ENCODE measurements at regions of chr17 and their contacts with region 1.

Region 1: GRCh38 chr17:8118769-8119580 is 661 bp upstream of the ALOXE3 start:
- DNase-seq: peak; percentile 64 to 89 (median 80)
- ATAC-seq: peak; percentile 66 to 77 (median 72)
- H3K4me3 ChIP-seq: peak overlapping the region; percentile 73 to 99
- H3K4me3 Mint-ChIP-seq: peak overlapping the region; percentile 88 to 91 (median 89)
- H3K27ac ChIP-seq: peak overlapping the region; percentile 51
- H3K27ac Mint-ChIP-seq: peak overlapping the region; percentile 95
- H3K4me1 ChIP-seq: peaks cover 44 to 62% of the 10 kb centered on the region in 2 experiments
- H3K4me1 Mint-ChIP-seq: peaks cover 54 to 62% (median 60%) of the 10 kb centered on the region in 3 donors
- H3K27me3 ChIP-seq: peaks cover 8 to 75% of the 10 kb centered on the region in 2 experiments
- H3K27me3 Mint-ChIP-seq: peaks cover 37 to 69% of the 10 kb centered on the region in 2 donors

Region 2: GRCh38 chr17:8073627-8074484 is 45.1 kb before region 1 on chr17:
- CTCF ChIA-PET with region 1: interaction called, 4 to 12 read pairs
- POLR2A ChIA-PET with region 1: no interaction called
- DNase-seq: peak; percentile 65 to 94 (median 81)
- ATAC-seq: peak; percentile 78 to 93 (median 84)
- H3K4me3 ChIP-seq: peak overlapping the region in 1 of 2 donors; percentile 36
- H3K4me3 Mint-ChIP-seq: peak overlapping the region; percentile 63 to 71 (median 66)
- H3K27ac ChIP-seq: no peak overlapping the region
- H3K27ac Mint-ChIP-seq: peak overlapping the region in 1 of 2 donors; percentile 84
- H3K4me1 ChIP-seq: peaks cover 4 to 31% of the 10 kb centered on the region in 2 experiments
- H3K4me1 Mint-ChIP-seq: peaks cover 23 to 28% (median 25%) of the 10 kb centered on the region in 3 donors
- H3K27me3 ChIP-seq: peaks cover 8 to 71% of the 10 kb centered on the region in 2 experiments
- H3K27me3 Mint-ChIP-seq: peaks cover 36 to 49% of the 10 kb centered on the region in 2 donors

Region 3: DNA sequence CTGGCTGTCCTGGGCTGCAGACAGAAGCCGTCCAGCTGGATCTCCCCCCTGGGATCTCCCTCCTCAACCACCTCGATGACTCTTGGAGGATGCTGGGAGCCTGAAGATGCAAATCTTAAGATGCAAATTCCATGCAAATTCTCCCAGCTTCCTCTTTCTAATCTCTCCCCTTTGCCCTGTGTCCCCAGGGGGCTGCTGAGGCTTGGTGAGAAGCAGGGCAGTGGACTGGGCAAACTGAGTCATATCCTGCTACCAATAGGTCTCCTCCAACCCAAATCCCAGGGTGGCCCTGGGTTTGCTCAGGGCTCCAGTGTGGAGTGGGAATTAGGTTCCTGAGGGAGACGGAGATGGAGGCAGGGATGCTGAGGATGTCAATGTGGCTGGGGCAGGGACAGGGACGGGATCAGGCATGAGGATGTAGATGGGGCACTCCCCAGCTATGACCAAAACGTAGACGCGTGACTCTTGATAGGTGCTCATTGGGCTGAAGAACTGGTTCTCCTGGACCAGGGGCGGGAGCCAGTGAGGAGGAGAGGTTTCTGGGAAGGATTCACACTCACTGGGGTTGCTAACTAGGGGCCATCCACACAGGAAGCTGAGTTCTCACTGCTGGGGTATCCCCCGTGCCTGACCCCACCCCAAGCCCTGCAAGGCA is 27.8 kb before region 1 on chr17:
- CTCF ChIA-PET with region 1: interaction called, 6 to 27 read pairs
- POLR2A ChIA-PET with region 1: no interaction called
- DNase-seq: no peak
- ATAC-seq: no peak
- H3K4me3 ChIP-seq: no peak overlapping the region
- H3K4me3 Mint-ChIP-seq: no peak overlapping the region
- H3K27ac ChIP-seq: no peak overlapping the region
- H3K27ac Mint-ChIP-seq: no peak overlapping the region
- H3K4me1 ChIP-seq: peaks cover 0 to 13% of the 10 kb centered on the region in 2 experiments
- H3K4me1 Mint-ChIP-seq: peaks cover 12 to 21% (median 18%) of the 10 kb centered on the region in 3 donors
- H3K27me3 ChIP-seq: peaks cover 2 to 60% of the 10 kb centered on the region in 2 experiments
- H3K27me3 Mint-ChIP-seq: peaks cover 24 to 38% of the 10 kb centered on the region in 2 donors

Region 4: DNA sequence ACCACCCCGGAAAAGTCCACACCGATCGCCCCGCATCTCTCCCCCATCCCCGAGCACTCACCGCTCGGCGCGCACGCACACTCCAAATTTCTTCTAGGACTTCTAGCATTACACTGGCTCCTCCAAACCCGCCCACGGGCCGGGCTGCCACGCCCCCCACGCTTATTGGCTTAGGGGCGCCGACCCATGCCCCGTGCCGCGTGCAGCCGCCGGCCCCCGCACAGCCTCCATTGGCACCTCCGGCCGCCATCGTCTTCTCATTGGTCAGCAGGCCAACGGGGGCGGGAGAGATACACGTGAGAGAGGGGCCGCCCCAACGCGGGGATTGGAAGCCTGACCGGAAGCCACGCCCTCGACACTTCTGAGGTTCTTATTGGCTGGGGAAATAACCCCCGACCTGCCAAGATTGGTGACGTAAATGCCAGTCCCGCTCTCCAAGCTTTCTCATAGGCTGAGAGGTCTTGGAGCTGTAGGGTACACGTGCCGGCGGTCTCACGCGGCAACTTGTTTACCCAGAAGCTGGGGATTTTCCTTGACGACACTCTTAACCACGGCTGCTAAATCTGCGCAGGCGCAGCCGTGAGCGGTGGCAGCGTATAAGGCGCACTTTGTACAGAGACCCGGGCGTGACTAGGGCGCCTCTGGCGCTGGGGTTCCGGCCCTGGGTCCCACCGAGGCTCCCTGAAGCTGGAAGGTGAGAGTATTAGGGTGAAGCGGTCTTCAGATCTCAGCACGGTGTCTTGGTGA is 37.4 kb after region 1 on chr17:
- CTCF ChIA-PET with region 1: interaction called in 1 of 2 experiments, 15 read pairs
- POLR2A ChIA-PET with region 1: interaction called in 1 of 2 experiments, 12 read pairs
- DNase-seq: peak; percentile 99 to 100 (median 100)
- ATAC-seq: peak; percentile 75 to 86 (median 85)
- H3K4me3 ChIP-seq: peak overlapping the region; percentile 91 to 96
- H3K4me3 Mint-ChIP-seq: no peak overlapping the region
- H3K27ac ChIP-seq: peak overlapping the region; percentile 100
- H3K27ac Mint-ChIP-seq: no peak overlapping the region
- H3K4me1 ChIP-seq: peaks cover 34 to 93% of the 10 kb centered on the region in 2 experiments
- H3K4me1 Mint-ChIP-seq: peaks cover 39 to 70% (median 54%) of the 10 kb centered on the region in 3 donors
- H3K27me3 ChIP-seq: no peaks in the 10 kb centered on the region
- H3K27me3 Mint-ChIP-seq: no peaks in the 10 kb centered on the region

Region 5: GRCh38 chr17:8222630-8223356 is 103.8 kb after region 1 on chr17:
- CTCF ChIA-PET with region 1: interaction called in 1 of 2 experiments, 27 read pairs
- POLR2A ChIA-PET with region 1: interaction called in 1 of 2 experiments, 4 read pairs
- DNase-seq: peak; percentile 75 to 92 (median 84)
- ATAC-seq: peak; percentile 57 to 59 (median 58)
- H3K4me3 ChIP-seq: peak overlapping the region; percentile 91 to 93
- H3K4me3 Mint-ChIP-seq: peak overlapping the region; percentile 87 to 94 (median 92)
- H3K27ac ChIP-seq: peak overlapping the region; percentile 96
- H3K27ac Mint-ChIP-seq: peak overlapping the region; percentile 95 to 98
- H3K4me1 ChIP-seq: peaks cover 14 to 73% of the 10 kb centered on the region in 2 experiments
- H3K4me1 Mint-ChIP-seq: peaks cover 61 to 73% (median 69%) of the 10 kb centered on the region in 3 donors
- H3K27me3 ChIP-seq: no peaks in the 10 kb centered on the region
- H3K27me3 Mint-ChIP-seq: peaks cover 0 to 9% of the 10 kb centered on the region in 2 donors